Heart right ventricle (tissue), 16 donors: ENCODE measurements at regions of chr7 and their contacts with region 1.

Region 1: DNA sequence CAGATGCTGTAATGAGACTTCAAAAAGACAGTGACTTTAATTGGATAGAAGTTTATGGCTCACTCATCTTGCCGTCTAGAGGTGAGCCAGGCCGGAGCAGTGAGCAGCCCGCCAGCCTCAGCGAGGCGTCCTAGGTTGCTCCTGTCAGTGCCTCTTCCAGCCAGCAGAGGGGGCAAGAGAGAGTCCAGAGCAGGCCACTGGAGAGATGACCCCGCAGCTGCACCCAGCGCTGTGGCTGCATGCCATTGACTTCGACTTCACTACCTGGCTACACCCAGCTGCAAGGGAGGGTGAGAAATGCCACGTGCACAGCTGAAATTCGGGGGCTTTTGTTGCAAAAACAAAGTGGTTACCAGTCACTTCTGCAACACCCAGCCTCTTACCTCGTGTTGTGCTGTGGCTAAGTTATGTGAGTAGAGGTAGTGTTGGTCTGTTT is 26.5 kb downstream of the NUB1 start:
- DNase-seq: peak; percentile 78 to 85
- ATAC-seq: peak; percentile 93 to 97 (median 96)
- H3K4me3 ChIP-seq: no peak overlapping the region
- H3K27ac ChIP-seq: no peak overlapping the region
- H3K4me1 ChIP-seq: peaks cover 0 to 15% (median 0%) of the 10 kb centered on the region in 9 donors
- H3K27me3 ChIP-seq: no peaks in the 10 kb centered on the region
- CTCF ChIP-seq: peak; percentile 85 to 98 (median 96)

Region 2: GRCh38 chr7:151448261-151449252 is 80.4 kb after region 1 on chr7:
- intact Hi-C with region 1: loop called (anchors 1 to 5 kb)
- DNase-seq: peak; percentile 67 to 69
- ATAC-seq: peak; percentile 82 to 94 (median 90)
- H3K4me3 ChIP-seq: peak overlapping the region; percentile 43 to 73 (median 58)
- H3K27ac ChIP-seq: peak overlapping the region in 6 of 10 donors; percentile 7 to 61 (median 26)
- H3K4me1 ChIP-seq: peaks cover 0 to 13% (median 4%) of the 10 kb centered on the region in 9 donors
- H3K27me3 ChIP-seq: no peaks in the 10 kb centered on the region
- CTCF ChIP-seq: peak; percentile 69 to 88 (median 85)